ENCODE measurements at regions of chr6 and their contacts with region 1.

Region 1: GRCh38 chr6:16128759-16129622 is at the start of gene MYLIP:
- DNase-seq: peak; percentile 82 to 97
- H3K4me3 ChIP-seq: peak within 1 kb of the TSS; percentile 72 to 95 (median 89)
- H3K27ac ChIP-seq: no peak within 1 kb of the TSS; the same call in 1 of the 2 replicates
- H3K4me1 ChIP-seq: peaks cover 0 to 5% (median 1%) of the 10 kb centered on the region in 4 experiments; a peak in 2 of 7 replicates
- H3K27me3 ChIP-seq: no peaks in the 10 kb centered on the region; a peak in 1 of 7 replicates
- CTCF ChIP-seq: peak; percentile 55 to 81 (median 61)
- EP300 ChIP-seq: no peak
- POLR2A ChIP-seq: peak; percentile 97 to 99
- RAD21 ChIP-seq: peak; percentile 62 to 73
- total RNA-seq, gene MYLIP: 26.9 and 28.2 TPM in 2 replicates

Region 2: GRCh38 chr6:15893556-15894268 is 235.3 kb before region 1 on chr6:
- CTCF ChIA-PET with region 1: interaction called, 9 read pairs
- POLR2A ChIA-PET with region 1: interaction called, 23 read pairs
- DNase-seq: no peak
- H3K4me3 ChIP-seq: peak overlapping the region in 1 of 4 experiments; percentile 43; a peak in 1 of 8 replicates
- H3K27ac ChIP-seq: peak overlapping the region; percentile 46
- H3K4me1 ChIP-seq: peaks cover 10 to 15% (median 14%) of the 10 kb centered on the region in 4 experiments; a peak in 6 of 7 replicates
- H3K27me3 ChIP-seq: no peaks in the 10 kb centered on the region
- CTCF ChIP-seq: peak in 2 of 3 experiments; percentile 45 to 71; a peak in 2 of 4 replicates
- EP300 ChIP-seq: no peak
- POLR2A ChIP-seq: no peak
- RAD21 ChIP-seq: peak; percentile 63 to 73

Region 3: GRCh38 chr6:15911753-15912504 is 217.1 kb before region 1 on chr6:
- CTCF ChIA-PET with region 1: no interaction called
- POLR2A ChIA-PET with region 1: interaction called, 11 read pairs
- DNase-seq: no peak
- H3K4me3 ChIP-seq: peak overlapping the region in 1 of 4 experiments; percentile 13; a peak in 2 of 8 replicates
- H3K27ac ChIP-seq: peak overlapping the region; percentile 47; the same call in 1 of the 2 replicates
- H3K4me1 ChIP-seq: peaks cover 17 to 32% (median 27%) of the 10 kb centered on the region in 4 experiments
- H3K27me3 ChIP-seq: no peaks in the 10 kb centered on the region
- CTCF ChIP-seq: no peak
- EP300 ChIP-seq: no peak
- POLR2A ChIP-seq: no peak
- RAD21 ChIP-seq: no peak

Region 4: DNA sequence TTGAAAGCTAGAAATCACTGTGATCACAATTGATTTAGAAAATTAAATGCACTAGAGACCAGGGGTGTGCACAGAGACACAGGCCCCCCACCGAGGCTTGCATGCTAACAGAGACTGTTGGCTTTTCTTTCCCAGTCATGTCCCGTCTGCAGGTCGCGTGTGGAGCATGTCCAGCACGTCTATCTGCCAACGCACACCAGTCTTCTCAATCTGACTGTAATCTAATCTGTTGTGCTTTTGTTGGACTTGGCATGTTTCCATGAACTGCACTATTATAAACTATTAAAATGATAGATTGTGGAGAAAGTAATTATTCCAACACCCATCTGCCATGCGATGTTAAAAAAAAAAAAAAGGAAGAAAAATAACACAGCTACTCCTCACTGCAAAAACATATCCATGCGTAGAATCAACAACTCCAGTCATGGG is 17.6 kb after region 1 on chr6:
- CTCF ChIA-PET with region 1: interaction called, 3 read pairs
- POLR2A ChIA-PET with region 1: interaction called, 70 read pairs
- DNase-seq: no peak
- H3K4me3 ChIP-seq: no peak overlapping the region
- H3K27ac ChIP-seq: no peak overlapping the region
- H3K4me1 ChIP-seq: no peaks in the 10 kb centered on the region; a peak in 1 of 7 replicates
- H3K27me3 ChIP-seq: no peaks in the 10 kb centered on the region
- CTCF ChIP-seq: no peak
- EP300 ChIP-seq: no peak
- POLR2A ChIP-seq: no peak
- RAD21 ChIP-seq: no peak